MCF 10A (cell line): ENCODE measurements at regions of chr17 and their contacts with region 1.

Region 1: GRCh38 chr17:48047741-48048383 is at the start of gene NFE2L1:
- DNase-seq: peak; percentile 100
- H3K4me3 Mint-ChIP-seq: peak within 1 kb of the TSS; percentile 91
- H3K27ac Mint-ChIP-seq: peak within 1 kb of the TSS; percentile 100
- H3K4me1 Mint-ChIP-seq: peaks cover 47% of the 10 kb centered on the region
- H3K27me3 Mint-ChIP-seq: no peaks in the 10 kb centered on the region
- CTCF ChIP-seq: no peak
- total RNA-seq, gene NFE2L1: 235 and 315 TPM in 2 replicates

Region 2: GRCh38 chr17:48030531-48030930 is 17.3 kb before region 1 on chr17:
- CTCF ChIA-PET with region 1: interaction called, 61 read pairs
- POLR2A ChIA-PET with region 1: interaction called, 220 read pairs
- intact Hi-C with region 1: loop called (anchors 1 kb)
- DNase-seq: no peak
- H3K4me3 Mint-ChIP-seq: no peak overlapping the region
- H3K27ac Mint-ChIP-seq: peak overlapping the region; percentile 90
- H3K4me1 Mint-ChIP-seq: peaks cover 28% of the 10 kb centered on the region
- H3K27me3 Mint-ChIP-seq: no peaks in the 10 kb centered on the region
- CTCF ChIP-seq: no peak

Region 3: DNA sequence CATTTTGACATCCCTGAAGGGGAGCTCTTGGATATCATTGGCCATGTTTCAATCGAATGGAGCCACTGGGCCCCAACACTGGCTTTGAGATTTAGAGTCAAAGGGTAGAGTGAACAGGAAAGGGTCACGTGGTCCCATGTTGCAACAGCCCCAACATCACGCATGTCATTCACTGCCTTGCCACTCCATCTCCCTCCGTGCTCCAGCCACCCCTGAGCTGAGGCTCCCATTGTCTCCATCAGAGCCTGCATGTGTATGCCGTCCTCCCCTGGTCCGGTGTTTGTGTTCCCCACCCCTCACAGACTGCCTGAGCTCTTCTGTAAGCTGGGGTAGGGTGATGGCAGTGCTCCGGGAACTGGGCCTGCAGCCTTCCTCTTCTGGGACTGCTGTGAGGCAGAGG is 12.4 kb after region 1 on chr17:
- CTCF ChIA-PET with region 1: interaction called, 3 read pairs
- POLR2A ChIA-PET with region 1: interaction called, 353 read pairs
- intact Hi-C with region 1: no loop called
- DNase-seq: no peak
- H3K4me3 Mint-ChIP-seq: no peak overlapping the region
- H3K27ac Mint-ChIP-seq: peak overlapping the region; percentile 64
- H3K4me1 Mint-ChIP-seq: peaks cover 40% of the 10 kb centered on the region
- H3K27me3 Mint-ChIP-seq: no peaks in the 10 kb centered on the region
- CTCF ChIP-seq: no peak

Region 4: DNA sequence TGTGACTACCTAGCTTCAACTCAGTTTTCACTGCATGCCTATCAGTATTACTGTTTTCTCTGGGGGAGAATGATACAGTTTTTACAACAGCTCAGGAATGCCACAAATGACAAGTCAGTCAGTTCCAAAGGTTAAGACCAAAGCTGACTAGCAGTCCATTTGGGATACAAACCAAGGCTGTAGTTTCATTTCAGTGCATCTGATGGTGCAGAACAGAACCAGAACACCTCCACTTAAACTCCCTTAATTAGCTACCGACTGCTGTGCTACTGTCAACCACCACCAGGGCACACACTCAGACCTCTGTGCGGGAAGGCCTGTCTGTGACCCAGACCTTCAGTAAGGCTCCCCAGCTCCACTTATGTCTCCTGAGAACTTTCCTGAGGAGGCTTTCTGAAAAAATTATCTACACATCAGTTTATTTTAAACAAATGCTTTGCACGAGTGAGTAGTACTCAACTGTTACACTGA is 20.7 kb after region 1 on chr17:
- CTCF ChIA-PET with region 1: interaction called, 26 read pairs
- POLR2A ChIA-PET with region 1: interaction called, 353 read pairs
- intact Hi-C with region 1: no loop called
- DNase-seq: no peak
- H3K4me3 Mint-ChIP-seq: no peak overlapping the region
- H3K27ac Mint-ChIP-seq: no peak overlapping the region
- H3K4me1 Mint-ChIP-seq: peaks cover 21% of the 10 kb centered on the region
- H3K27me3 Mint-ChIP-seq: no peaks in the 10 kb centered on the region
- CTCF ChIP-seq: peak; percentile 19

Region 5: GRCh38 chr17:48101012-48101720 is 53.3 kb after region 1 on chr17 and contains the start of gene CBX1:
- CTCF ChIA-PET with region 1: interaction called, 3 read pairs
- POLR2A ChIA-PET with region 1: interaction called, 73 read pairs
- intact Hi-C with region 1: no loop called
- DNase-seq: peak; percentile 91
- H3K4me3 Mint-ChIP-seq: peak within 1 kb of the TSS; percentile 92
- H3K27ac Mint-ChIP-seq: peak within 1 kb of the TSS; percentile 20
- H3K4me1 Mint-ChIP-seq: peaks cover 10% of the 10 kb centered on the region
- H3K27me3 Mint-ChIP-seq: no peaks in the 10 kb centered on the region
- CTCF ChIP-seq: no peak
- total RNA-seq, gene CBX1: 77.3 and 81.2 TPM in 2 replicates